Activated naive CD4-positive, alpha-beta T cell treated with anti-CD3 and anti-CD28 coated beads for 36 hours (primary cell): ENCODE measurements at regions of chr11 and their contacts with region 1.

Region 1: DNA sequence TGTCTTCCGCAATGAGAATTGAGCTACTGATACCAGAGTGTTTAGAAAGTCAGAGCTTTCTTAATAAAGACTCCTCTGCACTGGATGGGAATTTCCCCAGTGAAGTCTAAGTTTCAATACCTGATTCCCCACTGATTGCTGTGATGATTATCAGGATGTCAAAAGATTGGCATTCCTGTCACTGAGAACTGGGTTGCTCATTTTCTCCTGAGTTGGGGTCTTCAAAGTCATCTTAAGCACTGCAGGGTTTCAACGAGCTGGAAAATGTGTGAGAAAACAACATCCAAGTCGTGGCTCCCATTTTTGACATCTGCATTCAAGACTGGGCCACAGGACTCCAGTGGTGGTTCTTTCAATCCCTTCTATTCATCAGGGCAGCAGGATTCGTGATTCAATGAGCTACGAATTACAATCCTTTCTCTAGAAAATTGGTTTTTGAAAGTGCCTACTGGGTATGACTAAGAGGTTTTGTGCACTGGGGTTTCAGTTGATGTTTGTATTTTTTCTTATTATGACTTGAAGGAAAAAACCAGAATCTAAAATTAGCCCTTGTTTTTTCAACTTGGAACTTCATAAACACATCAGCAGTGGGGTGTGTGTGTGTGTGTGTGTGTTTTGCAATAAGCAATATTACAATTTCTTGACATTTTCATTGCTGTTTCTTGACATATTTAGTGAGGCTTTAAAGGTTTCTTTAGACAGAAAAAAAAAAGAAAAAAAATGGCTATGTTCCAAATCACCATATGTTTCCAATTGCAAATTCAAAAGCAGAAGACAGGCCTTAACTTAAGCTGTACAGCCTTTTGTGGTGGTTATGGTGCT is 233.0 kb downstream of the FAM76B start:
- DNase-seq: peak; percentile 66
- H3K4me3 Mint-ChIP-seq: no peak overlapping the region
- H3K27ac Mint-ChIP-seq: peak overlapping the region; percentile 83
- H3K4me1 Mint-ChIP-seq: peaks cover 22% of the 10 kb centered on the region
- H3K27me3 Mint-ChIP-seq: no peaks in the 10 kb centered on the region

Region 2: GRCh38 chr11:95345651-95346050 is 210.9 kb before region 1 on chr11:
- CTCF ChIA-PET with region 1: no interaction called
- intact Hi-C with region 1: loop called (anchors 2 kb)
- DNase-seq: peak; percentile 29
- H3K4me3 Mint-ChIP-seq: no peak overlapping the region
- H3K27ac Mint-ChIP-seq: no peak overlapping the region
- H3K4me1 Mint-ChIP-seq: peaks cover 18% of the 10 kb centered on the region
- H3K27me3 Mint-ChIP-seq: no peaks in the 10 kb centered on the region

Region 3: GRCh38 chr11:95577716-95578460 is 21.3 kb after region 1 on chr11:
- CTCF ChIA-PET with region 1: no interaction called
- intact Hi-C with region 1: loop called (anchors 1 kb)
- DNase-seq: peak; percentile 36
- H3K4me3 Mint-ChIP-seq: no peak overlapping the region
- H3K27ac Mint-ChIP-seq: no peak overlapping the region
- H3K4me1 Mint-ChIP-seq: peaks cover 10% of the 10 kb centered on the region
- H3K27me3 Mint-ChIP-seq: no peaks in the 10 kb centered on the region

Region 4: DNA sequence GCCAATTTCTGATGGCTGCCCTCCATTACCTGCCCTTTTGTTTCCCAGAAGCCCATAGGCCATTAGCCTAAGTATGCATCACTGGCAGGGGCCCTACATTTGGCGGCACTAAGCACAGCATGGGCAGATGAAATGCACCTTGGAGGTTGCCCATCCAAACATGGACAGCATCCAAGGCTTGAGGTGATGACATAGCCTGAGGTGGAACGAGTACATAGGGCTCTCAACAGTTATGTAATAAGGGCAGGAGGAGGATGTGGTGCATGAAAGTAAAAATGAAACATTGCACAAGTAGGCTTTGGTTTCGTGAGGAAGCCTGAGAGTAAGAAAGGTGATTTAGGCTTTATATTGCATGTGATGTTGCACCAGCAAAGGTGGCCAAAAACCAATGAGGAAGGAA is 84.9 kb after region 1 on chr11:
- CTCF ChIA-PET with region 1: no interaction called
- intact Hi-C with region 1: loop called (anchors 1 kb)
- DNase-seq: peak; percentile 52
- H3K4me3 Mint-ChIP-seq: no peak overlapping the region
- H3K27ac Mint-ChIP-seq: peak overlapping the region; percentile 55
- H3K4me1 Mint-ChIP-seq: peaks cover 22% of the 10 kb centered on the region
- H3K27me3 Mint-ChIP-seq: no peaks in the 10 kb centered on the region

Region 5: DNA sequence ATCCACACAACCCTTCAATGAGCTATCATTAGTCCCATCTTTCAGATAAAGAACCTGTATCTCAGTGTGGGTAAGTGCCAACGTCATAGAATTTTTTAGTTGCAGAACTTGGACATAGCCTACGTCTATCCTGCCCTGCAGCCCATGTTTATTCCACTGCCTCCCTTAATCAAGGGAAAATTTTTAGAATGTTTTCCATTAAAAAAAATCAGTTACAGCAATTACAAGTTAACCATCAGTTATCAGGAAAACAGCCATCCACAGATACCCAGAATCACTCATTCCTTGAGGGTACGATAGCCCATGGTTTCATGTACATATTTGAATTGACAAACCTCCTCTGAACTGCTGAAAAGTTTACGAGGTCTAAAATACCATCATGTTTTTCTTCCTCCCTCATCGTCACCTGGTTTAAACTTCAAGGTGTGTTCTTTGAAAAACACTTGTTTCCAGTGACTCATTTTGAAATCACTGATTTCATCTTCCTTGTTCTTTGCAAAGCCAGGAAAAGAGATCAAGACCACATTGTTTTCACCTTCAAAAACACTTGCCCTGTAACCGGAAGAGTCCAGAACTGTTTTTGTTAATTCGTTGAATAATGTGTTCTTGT is 132.1 kb after region 1 on chr11:
- CTCF ChIA-PET with region 1: no interaction called
- intact Hi-C with region 1: loop called (anchors 1 kb)
- DNase-seq: no peak
- H3K4me3 Mint-ChIP-seq: no peak overlapping the region
- H3K27ac Mint-ChIP-seq: no peak overlapping the region
- H3K4me1 Mint-ChIP-seq: peaks cover 38% of the 10 kb centered on the region
- H3K27me3 Mint-ChIP-seq: no peaks in the 10 kb centered on the region

Region 6: DNA sequence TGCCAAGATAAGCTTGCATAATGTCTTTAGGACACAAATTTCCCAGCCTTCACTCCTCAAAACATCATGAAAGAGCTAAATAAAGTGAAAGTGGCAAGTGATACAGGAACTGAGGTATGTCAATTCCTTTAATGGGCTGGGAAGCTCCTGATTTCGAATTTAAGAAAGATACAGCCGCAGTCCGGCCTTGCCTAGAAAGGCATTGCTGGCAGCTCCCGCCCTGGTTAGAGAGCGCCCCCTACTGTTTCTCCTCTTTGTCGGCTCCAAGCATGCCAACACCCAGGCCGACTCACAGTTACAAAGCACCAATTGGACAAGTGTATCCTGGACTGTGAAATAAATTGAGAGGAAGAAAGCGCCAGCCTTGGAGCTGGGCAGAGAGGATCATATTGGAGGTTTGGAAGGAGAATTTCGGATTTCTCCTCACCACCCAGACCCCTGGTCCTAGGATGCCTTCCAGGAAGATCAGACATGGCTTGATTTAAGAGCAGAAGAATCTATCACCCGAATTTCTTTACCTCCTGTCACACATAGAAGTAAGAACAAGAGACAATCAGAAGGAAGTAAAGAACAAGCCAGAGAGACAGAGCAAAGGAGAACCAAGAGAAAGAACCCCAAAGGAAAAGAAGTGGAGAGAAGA is 149.1 kb after region 1 on chr11:
- CTCF ChIA-PET with region 1: interaction called, 14 read pairs
- intact Hi-C with region 1: loop called (anchors 1 kb)
- DNase-seq: peak; percentile 95
- H3K4me3 Mint-ChIP-seq: no peak overlapping the region
- H3K27ac Mint-ChIP-seq: no peak overlapping the region
- H3K4me1 Mint-ChIP-seq: peaks cover 16% of the 10 kb centered on the region
- H3K27me3 Mint-ChIP-seq: no peaks in the 10 kb centered on the region